Motor neuron (in vitro differentiated cells): ENCODE measurements at regions of chr2 and their contacts with region 1.

Region 1: GRCh38 chr2:65710779-65711295 is 278.4 kb upstream of the SPRED2 start:
- ATAC-seq: peak in 3 of 8 experiments; percentile 18 to 39 (median 29)
- H3K4me3 ChIP-seq: no peak overlapping the region
- H3K27ac ChIP-seq: no peak overlapping the region
- H3K4me1 ChIP-seq: peaks cover 0 to 14% of the 10 kb centered on the region in 2 donors

Region 2: DNA sequence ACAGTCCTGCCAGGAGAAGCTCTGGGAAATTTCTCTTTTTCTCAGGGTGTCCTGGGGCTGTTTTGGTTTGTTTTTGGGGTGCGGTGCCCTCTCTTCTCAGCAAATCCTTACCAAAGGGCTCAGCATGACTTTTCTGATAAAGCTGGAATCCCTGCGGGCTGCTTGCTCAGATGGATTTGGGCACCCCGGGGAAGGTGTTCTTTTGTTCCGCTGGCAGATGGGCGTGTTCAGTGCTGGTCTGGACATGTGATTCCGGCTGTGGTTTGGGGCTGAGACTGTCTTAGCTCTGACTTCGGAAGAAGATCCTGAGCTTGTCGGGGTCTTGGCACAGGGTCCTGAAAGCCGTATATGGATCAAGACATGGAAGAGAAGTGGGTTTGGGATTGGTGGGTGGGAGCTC is 144.2 kb before region 1 on chr2:
- in situ Hi-C with region 1: no loop called
- ATAC-seq: peak in 1 of 8 experiments; percentile 22
- H3K4me3 ChIP-seq: no peak overlapping the region
- H3K27ac ChIP-seq: no peak overlapping the region
- H3K4me1 ChIP-seq: no peaks in the 10 kb centered on the region

Region 3: GRCh38 chr2:65630643-65631042 is 80.2 kb before region 1 on chr2:
- in situ Hi-C with region 1: loop called in 1 of 9 experiments (anchors 10 kb)
- ATAC-seq: peak in 2 of 8 experiments; percentile 77 to 88
- H3K4me3 ChIP-seq: no peak overlapping the region
- H3K27ac ChIP-seq: no peak overlapping the region
- H3K4me1 ChIP-seq: no peaks in the 10 kb centered on the region

Region 4: DNA sequence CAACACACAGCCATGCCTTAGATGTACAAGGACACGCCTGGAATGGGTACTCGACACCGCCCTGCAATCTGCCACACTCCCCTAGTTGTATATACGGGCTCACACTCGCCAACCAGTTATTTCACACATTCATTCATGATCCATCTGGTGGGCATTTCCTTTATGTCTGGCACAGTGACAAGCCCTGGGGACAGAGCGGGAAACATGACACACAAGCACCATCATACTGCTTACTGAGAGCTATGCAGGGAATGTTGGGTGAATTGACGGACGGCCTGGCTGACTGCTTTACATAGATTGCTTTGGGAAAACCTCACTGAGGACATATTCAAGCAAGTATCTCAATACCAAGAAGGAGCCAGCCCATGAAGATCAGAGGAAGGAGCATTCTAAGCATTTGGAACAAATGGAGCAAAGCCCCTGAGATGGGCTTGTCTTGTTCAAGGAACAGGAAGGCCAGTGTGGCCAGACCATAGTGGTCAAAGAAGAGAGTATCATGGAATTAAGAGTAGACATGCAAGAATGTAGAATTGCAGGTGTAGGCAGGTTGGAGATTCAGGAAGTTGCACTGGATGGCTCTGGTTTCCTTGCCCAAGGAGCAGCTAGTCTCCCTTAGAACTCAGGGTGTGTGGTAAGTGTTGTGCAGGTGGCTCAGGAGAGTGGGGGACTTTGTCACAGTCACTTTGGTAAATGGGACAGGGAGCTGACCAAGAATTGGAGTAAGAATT is 169.8 kb after region 1 on chr2:
- in situ Hi-C with region 1: no loop called
- ATAC-seq: peak in 3 of 8 experiments; percentile 33 to 69 (median 46)
- H3K4me3 ChIP-seq: no peak overlapping the region
- H3K27ac ChIP-seq: peak overlapping the region in 1 of 2 donors; percentile 2
- H3K4me1 ChIP-seq: peaks cover 29 to 44% of the 10 kb centered on the region in 2 donors